ENCODE measurements at regions of chr7 and their contacts with region 1.

Region 1: DNA sequence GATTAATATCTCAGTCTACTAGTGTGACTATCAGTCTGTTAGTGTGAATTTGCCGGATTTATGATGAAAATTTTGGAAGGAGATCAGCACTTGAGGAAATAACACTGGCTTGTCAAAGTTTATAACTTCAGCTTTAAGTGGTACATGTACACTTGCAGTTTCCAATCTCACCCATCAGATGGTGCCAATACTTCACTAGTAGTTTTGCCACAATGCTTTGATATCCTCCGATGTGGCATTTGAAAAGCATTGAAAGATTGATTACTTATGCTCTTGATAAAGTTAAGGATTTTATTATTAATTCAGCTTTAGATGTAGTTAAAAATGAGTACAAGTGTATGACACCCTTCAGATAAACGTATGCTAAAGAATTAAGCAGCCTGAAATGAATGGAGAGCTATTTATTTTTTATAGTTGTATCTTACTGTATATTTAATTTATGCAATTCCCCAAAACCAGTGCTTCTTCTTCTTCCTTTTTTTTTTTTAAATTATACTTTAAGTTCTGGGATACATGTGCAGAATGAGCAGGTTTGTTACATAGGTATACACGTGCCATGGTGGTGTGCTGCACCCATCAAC is 98.2 kb downstream of the ANLN start:
- DNase-seq: peak in 1 of 3 donors; percentile 71
- ATAC-seq: peak; percentile 68
- H3K4me3 ChIP-seq: no peak overlapping the region
- H3K4me1 ChIP-seq: no peaks in the 10 kb centered on the region
- CTCF ChIP-seq: peak; percentile 37

Region 2: DNA sequence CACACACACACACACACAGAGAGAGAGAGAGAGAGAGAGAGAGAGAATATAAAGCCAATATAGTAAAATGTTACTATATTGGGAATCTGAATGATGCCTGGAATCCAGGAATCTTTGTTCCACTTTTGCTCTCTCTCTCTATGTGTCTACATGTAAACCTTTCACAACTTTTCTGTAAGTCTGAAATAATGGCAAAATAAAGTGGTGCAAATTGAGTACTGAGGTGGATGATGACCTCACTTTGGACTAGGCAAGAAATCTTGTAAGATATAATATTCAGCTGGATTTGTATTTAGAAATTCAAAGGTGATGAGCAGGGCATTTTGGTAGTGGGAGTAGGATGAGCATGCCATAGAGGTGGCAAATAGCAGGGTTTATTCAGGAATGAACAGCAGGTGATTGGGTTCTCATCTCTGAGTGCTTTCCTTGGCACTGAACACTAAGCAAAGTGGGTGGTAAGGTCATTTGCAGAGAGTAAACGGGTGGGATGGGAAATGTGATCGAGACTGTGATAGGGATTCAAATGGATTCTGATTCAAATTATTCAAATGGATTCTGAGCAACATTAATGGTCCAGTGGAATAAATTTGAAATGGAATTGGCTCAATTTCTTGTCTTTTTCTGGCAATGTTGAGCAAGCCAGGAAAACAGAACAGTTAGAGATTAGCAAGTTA is 107.9 kb before region 1 on chr7:
- intact Hi-C with region 1: no loop called
- DNase-seq: no peak
- ATAC-seq: no peak
- H3K4me3 ChIP-seq: no peak overlapping the region
- H3K4me1 ChIP-seq: no peaks in the 10 kb centered on the region
- CTCF ChIP-seq: no peak

Region 3: GRCh38 chr7:36661135-36661840 is 173.4 kb after region 1 on chr7:
- intact Hi-C with region 1: loop called in 1 of 2 experiments (anchors 10 kb)
- DNase-seq: peak in 1 of 3 donors; percentile 63
- ATAC-seq: peak; percentile 86
- H3K4me3 ChIP-seq: no peak overlapping the region
- H3K4me1 ChIP-seq: peaks cover 22% of the 10 kb centered on the region
- CTCF ChIP-seq: no peak